ENCODE measurements at regions of chr7 and their contacts with region 1.

Region 1: GRCh38 chr7:91288208-91288824 is 24.1 kb downstream of the FZD1 start:
- DNase-seq: peak; percentile 53
- ATAC-seq: peak; percentile 53; the same call in 1 of the 2 replicates
- H3K4me3 ChIP-seq: no peak overlapping the region
- H3K27ac ChIP-seq: no peak overlapping the region
- H3K4me1 ChIP-seq: no peaks in the 10 kb centered on the region; the same call in 1 of the 2 replicates
- H3K27me3 ChIP-seq: no peaks in the 10 kb centered on the region
- CTCF ChIP-seq: peak; percentile 65

Region 2: GRCh38 chr7:91551377-91552175 is 263.3 kb after region 1 on chr7:
- CTCF ChIA-PET with region 1: no interaction called
- POLR2A ChIA-PET with region 1: no interaction called
- intact Hi-C with region 1: loop called (anchors 5 kb)
- DNase-seq: peak; percentile 30
- ATAC-seq: peak; percentile 91
- H3K4me3 ChIP-seq: no peak overlapping the region
- H3K27ac ChIP-seq: no peak overlapping the region
- H3K4me1 ChIP-seq: peaks cover 11% of the 10 kb centered on the region
- H3K27me3 ChIP-seq: no peaks in the 10 kb centered on the region
- CTCF ChIP-seq: no peak

Measured in PC-3 (cell line).